GM12878 (cell line): ENCODE measurements at regions of chr3 and their contacts with region 1.

Region 1: GRCh38 chr3:114827495-114827894 is 319.6 kb downstream of the ZBTB20 start:
- DNase-seq: peak; percentile 16
- ATAC-seq: peak; percentile 92
- H3K4me3 ChIP-seq: no peak overlapping the region
- H3K27ac ChIP-seq: no peak overlapping the region
- H3K4me1 ChIP-seq: no peaks in the 10 kb centered on the region
- H3K27me3 ChIP-seq: no peaks in the 10 kb centered on the region
- CTCF ChIP-seq: peak; percentile 59 to 69 (median 61); a peak in 5 of 6 replicates
- EP300 ChIP-seq: no peak
- POLR2A ChIP-seq: no peak
- RAD21 ChIP-seq: peak; percentile 84

Region 2: GRCh38 chr3:114597013-114597412 is 230.5 kb before region 1 on chr3:
- CTCF ChIA-PET with region 1: no interaction called
- POLR2A ChIA-PET with region 1: no interaction called
- RAD21 ChIA-PET with region 1: no interaction called
- SMC1A ChIA-PET with region 1: no interaction called
- in situ Hi-C with region 1: no loop called
- intact Hi-C with region 1: no loop called
- DNase-seq: no peak
- ATAC-seq: no peak
- H3K4me3 ChIP-seq: no peak overlapping the region
- H3K27ac ChIP-seq: no peak overlapping the region
- H3K4me1 ChIP-seq: no peaks in the 10 kb centered on the region; the same call in 1 of the 2 replicates
- H3K27me3 ChIP-seq: no peaks in the 10 kb centered on the region
- CTCF ChIP-seq: no peak
- EP300 ChIP-seq: no peak
- POLR2A ChIP-seq: no peak
- RAD21 ChIP-seq: no peak

Region 3: DNA sequence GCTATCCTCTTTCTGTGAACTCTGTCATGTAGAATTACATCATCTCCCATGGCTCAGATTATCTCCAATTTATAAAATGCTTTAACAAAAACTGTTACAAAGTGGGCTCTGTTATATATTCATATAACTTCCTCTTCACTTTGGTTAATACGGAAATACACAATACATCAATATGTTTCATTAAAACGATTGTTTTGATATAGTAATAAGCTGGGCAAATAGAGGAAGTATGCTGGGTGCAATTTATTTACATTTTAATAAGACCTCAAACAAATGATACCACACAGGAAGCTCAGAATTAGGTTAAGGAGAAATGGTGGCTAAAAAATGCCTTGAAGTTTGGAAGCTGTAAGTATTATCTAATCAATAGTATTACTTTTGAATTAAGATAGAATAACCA is 11.4 kb before region 1 on chr3:
- CTCF ChIA-PET with region 1: interaction called, 14 read pairs
- POLR2A ChIA-PET with region 1: no interaction called
- RAD21 ChIA-PET with region 1: interaction called, 5 read pairs
- SMC1A ChIA-PET with region 1: interaction called, 10 read pairs
- in situ Hi-C with region 1: no loop called
- intact Hi-C with region 1: no loop called
- DNase-seq: no peak
- ATAC-seq: no peak
- H3K4me3 ChIP-seq: no peak overlapping the region
- H3K27ac ChIP-seq: no peak overlapping the region
- H3K4me1 ChIP-seq: no peaks in the 10 kb centered on the region
- H3K27me3 ChIP-seq: no peaks in the 10 kb centered on the region
- CTCF ChIP-seq: no peak
- EP300 ChIP-seq: no peak
- POLR2A ChIP-seq: no peak
- RAD21 ChIP-seq: no peak

Region 4: GRCh38 chr3:114892135-114892879 is 64.8 kb after region 1 on chr3:
- CTCF ChIA-PET with region 1: no interaction called
- POLR2A ChIA-PET with region 1: no interaction called
- RAD21 ChIA-PET with region 1: no interaction called
- SMC1A ChIA-PET with region 1: no interaction called
- in situ Hi-C with region 1: no loop called
- intact Hi-C with region 1: no loop called
- DNase-seq: no peak
- ATAC-seq: no peak
- H3K4me3 ChIP-seq: no peak overlapping the region
- H3K27ac ChIP-seq: no peak overlapping the region
- H3K4me1 ChIP-seq: no peaks in the 10 kb centered on the region
- H3K27me3 ChIP-seq: no peaks in the 10 kb centered on the region
- CTCF ChIP-seq: no peak
- EP300 ChIP-seq: no peak
- POLR2A ChIP-seq: no peak
- RAD21 ChIP-seq: no peak

Region 5: GRCh38 chr3:115085197-115085865 is 257.8 kb after region 1 on chr3:
- CTCF ChIA-PET with region 1: interaction called, 10 read pairs
- POLR2A ChIA-PET with region 1: no interaction called
- RAD21 ChIA-PET with region 1: interaction called, 6 read pairs
- SMC1A ChIA-PET with region 1: interaction called, 4 read pairs
- in situ Hi-C with region 1: loop called (anchors 10 kb)
- intact Hi-C with region 1: loop called (anchors 1 kb)
- DNase-seq: no peak
- ATAC-seq: no peak
- H3K4me3 ChIP-seq: no peak overlapping the region
- H3K27ac ChIP-seq: no peak overlapping the region
- H3K4me1 ChIP-seq: no peaks in the 10 kb centered on the region
- H3K27me3 ChIP-seq: no peaks in the 10 kb centered on the region
- CTCF ChIP-seq: no peak
- EP300 ChIP-seq: no peak
- POLR2A ChIP-seq: no peak
- RAD21 ChIP-seq: no peak

Region 6: GRCh38 chr3:115169808-115170207 is 342.3 kb after region 1 on chr3:
- CTCF ChIA-PET with region 1: interaction called, 6 read pairs
- POLR2A ChIA-PET with region 1: no interaction called
- RAD21 ChIA-PET with region 1: no interaction called
- SMC1A ChIA-PET with region 1: interaction called, 3 read pairs
- in situ Hi-C with region 1: no loop called
- intact Hi-C with region 1: loop called (anchors 5 kb)
- DNase-seq: no peak
- ATAC-seq: no peak
- H3K4me3 ChIP-seq: no peak overlapping the region
- H3K27ac ChIP-seq: no peak overlapping the region
- H3K4me1 ChIP-seq: no peaks in the 10 kb centered on the region
- H3K27me3 ChIP-seq: no peaks in the 10 kb centered on the region; a peak in 1 of 4 replicates
- CTCF ChIP-seq: no peak; a peak in 2 of 6 replicates
- EP300 ChIP-seq: no peak
- POLR2A ChIP-seq: no peak
- RAD21 ChIP-seq: no peak

Region 7: GRCh38 chr3:115819785-115820384 is 992.4 kb after region 1 on chr3:
- CTCF ChIA-PET with region 1: interaction called, 4 read pairs
- POLR2A ChIA-PET with region 1: no interaction called
- RAD21 ChIA-PET with region 1: no interaction called
- SMC1A ChIA-PET with region 1: no interaction called
- in situ Hi-C with region 1: loop called (anchors 25 kb)
- intact Hi-C with region 1: loop called (anchors 10 kb)
- DNase-seq: peak; percentile 45
- ATAC-seq: peak; percentile 96
- H3K4me3 ChIP-seq: no peak overlapping the region
- H3K27ac ChIP-seq: no peak overlapping the region
- H3K4me1 ChIP-seq: no peaks in the 10 kb centered on the region
- H3K27me3 ChIP-seq: no peaks in the 10 kb centered on the region
- CTCF ChIP-seq: peak; percentile 93 to 100 (median 99)
- EP300 ChIP-seq: no peak
- POLR2A ChIP-seq: no peak
- RAD21 ChIP-seq: peak; percentile 79